ENCODE measurements at regions of chr19 and their contacts with region 1.

Region 1: DNA sequence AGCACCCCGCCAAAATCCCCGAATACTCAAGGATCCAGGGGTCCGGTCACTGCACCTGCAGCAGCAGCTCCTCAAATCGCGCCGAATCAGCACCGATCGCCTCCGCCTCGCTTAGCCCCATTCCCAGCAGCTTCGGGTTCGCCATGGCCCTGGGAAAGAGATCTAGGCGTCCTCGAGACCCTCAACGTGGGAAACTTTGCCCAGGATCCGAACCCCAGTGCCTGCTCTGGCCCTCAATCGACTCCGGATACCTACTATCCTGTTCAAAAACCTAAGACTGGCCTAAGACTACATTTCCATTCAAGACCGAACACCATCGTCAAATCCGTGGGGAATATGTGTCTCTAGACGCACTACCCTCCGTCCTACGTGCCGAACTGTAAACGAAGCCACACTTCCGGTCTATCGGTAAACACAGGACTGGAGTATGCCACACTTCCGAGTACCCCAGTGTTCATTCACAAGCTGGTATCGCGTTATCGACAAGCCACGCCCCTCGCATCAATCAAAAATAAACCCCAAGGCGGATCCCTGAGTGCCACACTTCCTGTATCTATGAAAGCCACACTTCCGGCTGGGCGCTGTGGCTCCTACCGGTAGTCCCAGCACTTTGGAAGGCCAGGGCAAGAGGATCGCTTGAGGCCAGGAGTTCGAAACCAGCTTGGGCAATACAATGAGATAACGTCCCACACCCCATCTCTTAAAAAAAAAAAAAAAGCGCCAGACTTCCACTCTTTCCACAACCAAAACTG is at the start of gene PIH1D1:
- H3K4me3 ChIP-seq: peak within 1 kb of the TSS; percentile 69
- H3K27ac ChIP-seq: peak within 1 kb of the TSS; percentile 90
- H3K4me1 ChIP-seq: 0 out of 2 replicates have a peak, but pooled peaks cover 6% of the 10 kb centered on the region
- CTCF ChIP-seq: peak; percentile 46

Region 2: GRCh38 chr19:49173198-49173597 is 278.4 kb before region 1 on chr19:
- CTCF ChIA-PET with region 1: no interaction called
- POLR2A ChIA-PET with region 1: no interaction called
- H3K4me3 ChIP-seq: no peak overlapping the region
- H3K27ac ChIP-seq: no peak overlapping the region
- H3K4me1 ChIP-seq: no peaks in the 10 kb centered on the region
- CTCF ChIP-seq: no peak

Region 3: GRCh38 chr19:49368711-49369358 is 82.8 kb before region 1 on chr19:
- CTCF ChIA-PET with region 1: no interaction called
- POLR2A ChIA-PET with region 1: no interaction called
- H3K4me3 ChIP-seq: no peak overlapping the region
- H3K27ac ChIP-seq: no peak overlapping the region
- H3K4me1 ChIP-seq: no peaks in the 10 kb centered on the region
- CTCF ChIP-seq: no peak

Region 4: GRCh38 chr19:49468746-49469447 is 17.3 kb after region 1 on chr19:
- CTCF ChIA-PET with region 1: interaction called, 16 read pairs
- POLR2A ChIA-PET with region 1: interaction called, 17 read pairs
- H3K4me3 ChIP-seq: no peak overlapping the region
- H3K27ac ChIP-seq: peak overlapping the region; percentile 40; the same call in 1 of the 2 replicates
- H3K4me1 ChIP-seq: 0 out of 2 replicates have a peak, but pooled peaks cover 5% of the 10 kb centered on the region
- CTCF ChIP-seq: no peak

Region 5: GRCh38 chr19:49473868-49474544 is 22.4 kb after region 1 on chr19 and contains the start of gene FLT3LG:
- CTCF ChIA-PET with region 1: interaction called, 24 read pairs
- POLR2A ChIA-PET with region 1: interaction called, 17 read pairs
- H3K4me3 ChIP-seq: peak within 1 kb of the TSS; percentile 59
- H3K27ac ChIP-seq: peak within 1 kb of the TSS; percentile 5; the same call in 1 of the 2 replicates
- H3K4me1 ChIP-seq: 0 out of 2 replicates have a peak, but pooled peaks cover 2% of the 10 kb centered on the region
- CTCF ChIP-seq: peak; percentile 97

Region 6: DNA sequence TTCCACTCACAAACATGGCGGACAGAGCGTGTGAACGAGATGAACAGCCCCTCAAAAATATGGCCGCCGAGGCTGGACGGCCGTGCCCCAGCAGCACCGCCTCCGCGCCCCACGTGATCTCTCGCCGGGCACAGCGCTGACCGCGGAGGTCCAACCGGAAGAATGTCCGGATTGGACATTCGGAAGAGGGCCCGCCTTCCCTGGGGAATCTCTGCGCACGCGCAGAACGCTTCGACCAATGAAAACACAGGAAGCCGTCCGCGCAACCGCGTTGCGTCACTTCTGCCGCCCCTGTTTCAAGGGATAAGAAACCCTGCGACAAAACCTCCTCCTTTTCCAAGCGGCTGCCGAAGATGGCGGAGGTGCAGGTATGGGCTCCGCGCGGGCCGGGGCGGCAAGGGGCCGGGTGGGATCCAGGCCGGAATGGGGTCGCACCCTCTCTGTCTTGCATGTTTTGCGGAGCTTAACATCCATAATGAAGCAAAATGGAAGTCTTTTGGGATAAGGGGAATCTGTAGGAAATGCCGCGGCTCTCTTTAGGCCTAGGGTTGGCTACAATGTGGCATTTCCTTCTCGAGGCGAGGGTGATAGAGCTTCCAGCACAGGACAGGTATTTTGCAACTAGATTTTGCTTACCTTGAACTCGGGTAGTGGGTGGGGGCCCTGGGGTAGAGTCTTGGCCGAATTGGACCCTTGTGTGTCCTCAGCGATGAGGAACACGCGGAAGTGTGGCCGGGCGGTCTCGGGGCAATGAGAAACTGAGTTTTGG is 35.9 kb after region 1 on chr19 and contains the start of gene RPL13A:
- CTCF ChIA-PET with region 1: no interaction called
- POLR2A ChIA-PET with region 1: interaction called, 13 read pairs
- H3K4me3 ChIP-seq: peak within 1 kb of the TSS; percentile 96
- H3K27ac ChIP-seq: peak within 1 kb of the TSS; percentile 95
- H3K4me1 ChIP-seq: peaks cover 4% of the 10 kb centered on the region; the same call in 1 of the 2 replicates
- CTCF ChIP-seq: no peak

Region 7: GRCh38 chr19:49497047-49497788 is 45.6 kb after region 1 on chr19:
- CTCF ChIA-PET with region 1: no interaction called
- POLR2A ChIA-PET with region 1: interaction called, 24 read pairs
- H3K4me3 ChIP-seq: peak overlapping the region; percentile 89
- H3K27ac ChIP-seq: peak overlapping the region; percentile 87
- H3K4me1 ChIP-seq: peaks cover 7% of the 10 kb centered on the region
- CTCF ChIP-seq: no peak

Region 8: GRCh38 chr19:49533551-49534488 is 82.2 kb after region 1 on chr19:
- CTCF ChIA-PET with region 1: no interaction called
- POLR2A ChIA-PET with region 1: no interaction called
- H3K4me3 ChIP-seq: peak overlapping the region; percentile 56
- H3K27ac ChIP-seq: no peak overlapping the region
- H3K4me1 ChIP-seq: no peaks in the 10 kb centered on the region
- CTCF ChIP-seq: no peak

Region 9: DNA sequence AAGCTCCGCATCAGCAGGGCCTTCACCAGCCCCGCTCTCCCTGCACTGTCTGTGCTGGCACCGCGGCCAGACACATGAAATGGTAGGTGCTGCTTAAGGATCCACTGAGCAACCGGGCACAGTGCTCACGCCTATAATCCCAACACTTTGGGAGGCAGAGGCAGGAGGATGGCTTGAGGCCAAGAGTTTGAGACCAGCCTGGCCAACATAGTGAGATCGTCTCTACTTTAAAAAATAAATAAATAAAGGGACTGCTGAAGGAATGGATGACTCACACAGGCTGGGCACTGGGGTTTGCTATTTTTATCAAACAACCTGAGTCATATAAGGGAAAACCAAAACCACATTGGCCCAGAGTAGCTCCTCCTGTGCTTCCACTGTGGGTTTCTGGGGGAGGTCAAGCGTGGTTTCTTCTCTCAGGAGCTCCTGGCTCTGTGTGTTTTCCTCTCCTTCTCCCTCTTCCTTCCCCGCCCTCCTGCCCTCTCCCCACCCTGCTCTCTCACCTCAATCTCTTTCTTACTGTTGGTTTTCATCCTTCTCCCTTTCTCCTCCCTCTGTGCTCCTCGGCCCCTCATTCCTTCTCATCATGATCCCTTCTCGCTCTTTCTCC is 552.3 kb after region 1 on chr19:
- CTCF ChIA-PET with region 1: no interaction called
- POLR2A ChIA-PET with region 1: no interaction called
- H3K4me3 ChIP-seq: no peak overlapping the region
- H3K27ac ChIP-seq: peak overlapping the region; percentile 54
- H3K4me1 ChIP-seq: peaks cover 5% of the 10 kb centered on the region; the same call in 1 of the 2 replicates
- CTCF ChIP-seq: no peak

Measured in HEK293 (cell line).